Activated CD8-positive, alpha-beta T cell treated with anti-CD3 and anti-CD28 coated beads for 36 hours (primary cell): ENCODE measurements at regions of chr6 and their contacts with region 1.

Region 1: GRCh38 chr6:162964488-162965140 is 236.8 kb downstream of the PACRG start:
- DNase-seq: no peak
- ATAC-seq: no peak
- H3K4me3 Mint-ChIP-seq: no peak overlapping the region
- H3K27ac Mint-ChIP-seq: no peak overlapping the region
- H3K4me1 Mint-ChIP-seq: no peaks in the 10 kb centered on the region
- H3K27me3 Mint-ChIP-seq: no peaks in the 10 kb centered on the region
- CTCF ChIP-seq: no peak

Region 2: DNA sequence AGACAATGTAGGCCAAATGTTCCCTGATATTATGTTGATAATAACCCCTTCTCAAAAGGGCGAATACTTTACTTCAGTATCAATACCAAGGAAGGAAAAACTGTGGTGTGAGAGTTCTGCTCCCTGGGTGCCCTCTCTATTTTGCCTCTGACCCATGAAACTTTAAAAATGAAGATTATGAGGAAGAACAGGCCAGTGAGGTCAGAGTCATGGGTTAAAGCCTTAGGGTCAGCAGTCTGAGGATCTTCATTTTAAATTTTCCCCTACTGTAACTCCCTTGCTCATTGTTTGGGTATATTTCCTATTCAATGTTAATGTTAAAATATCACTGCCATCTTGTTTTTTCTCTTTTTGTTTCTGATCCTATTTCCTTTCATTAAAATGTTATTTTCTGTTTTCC is 284.9 kb before region 1 on chr6:
- CTCF ChIA-PET with region 1: no interaction called
- POLR2A ChIA-PET with region 1: no interaction called
- intact Hi-C with region 1: loop called (anchors 5 kb)
- DNase-seq: no peak
- ATAC-seq: no peak
- H3K4me3 Mint-ChIP-seq: no peak overlapping the region
- H3K27ac Mint-ChIP-seq: no peak overlapping the region
- H3K4me1 Mint-ChIP-seq: no peaks in the 10 kb centered on the region
- H3K27me3 Mint-ChIP-seq: no peaks in the 10 kb centered on the region
- CTCF ChIP-seq: no peak

Region 3: DNA sequence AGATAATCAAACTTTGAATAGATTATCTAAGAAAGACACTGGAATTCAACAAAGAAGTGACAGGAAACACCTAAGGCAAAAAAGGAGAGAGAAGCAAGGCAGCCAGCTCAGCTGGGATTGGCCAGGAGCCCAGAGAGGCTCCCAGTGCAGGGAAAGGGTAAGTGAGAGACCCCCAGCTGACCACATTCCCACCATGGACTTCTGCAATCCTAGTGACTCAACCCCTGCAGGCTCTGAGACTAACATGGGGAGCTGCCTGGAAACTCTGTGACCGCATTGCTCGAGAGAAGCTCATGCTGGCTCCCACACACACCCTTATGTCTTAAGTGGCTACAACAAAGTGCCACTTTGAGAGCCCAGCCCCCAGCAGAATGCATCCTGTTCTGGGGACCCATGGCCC is 21.7 kb before region 1 on chr6:
- CTCF ChIA-PET with region 1: no interaction called
- POLR2A ChIA-PET with region 1: no interaction called
- intact Hi-C with region 1: no loop called
- DNase-seq: no peak
- ATAC-seq: no peak
- H3K4me3 Mint-ChIP-seq: no peak overlapping the region
- H3K27ac Mint-ChIP-seq: no peak overlapping the region
- H3K4me1 Mint-ChIP-seq: no peaks in the 10 kb centered on the region
- H3K27me3 Mint-ChIP-seq: peaks cover 1% of the 10 kb centered on the region
- CTCF ChIP-seq: no peak

Region 4: DNA sequence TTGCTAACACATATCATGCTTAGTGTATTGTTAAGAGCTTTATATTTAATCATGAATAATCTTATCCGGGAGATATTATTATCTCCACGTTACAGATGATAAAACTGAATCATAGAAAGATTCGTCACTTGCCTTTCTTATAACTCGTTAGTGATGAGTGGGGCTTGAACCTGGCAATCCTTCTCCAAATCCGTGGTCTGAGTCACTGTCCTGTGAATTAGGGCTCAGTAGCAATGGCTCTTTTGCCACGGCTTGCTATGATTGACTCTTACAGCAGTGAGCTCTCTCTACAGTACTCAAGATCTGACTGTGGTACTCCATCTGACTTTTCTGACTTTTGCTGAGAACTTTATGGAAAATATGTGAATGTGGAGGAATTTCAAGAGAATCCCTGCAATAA is 10.1 kb after region 1 on chr6:
- CTCF ChIA-PET with region 1: no interaction called
- POLR2A ChIA-PET with region 1: no interaction called
- intact Hi-C with region 1: no loop called
- DNase-seq: no peak
- ATAC-seq: no peak
- H3K4me3 Mint-ChIP-seq: no peak overlapping the region
- H3K27ac Mint-ChIP-seq: no peak overlapping the region
- H3K4me1 Mint-ChIP-seq: no peaks in the 10 kb centered on the region
- H3K27me3 Mint-ChIP-seq: no peaks in the 10 kb centered on the region
- CTCF ChIP-seq: no peak